Panc1 (cell line): ENCODE measurements at regions of chr4 and their contacts with region 1.

Region 1: DNA sequence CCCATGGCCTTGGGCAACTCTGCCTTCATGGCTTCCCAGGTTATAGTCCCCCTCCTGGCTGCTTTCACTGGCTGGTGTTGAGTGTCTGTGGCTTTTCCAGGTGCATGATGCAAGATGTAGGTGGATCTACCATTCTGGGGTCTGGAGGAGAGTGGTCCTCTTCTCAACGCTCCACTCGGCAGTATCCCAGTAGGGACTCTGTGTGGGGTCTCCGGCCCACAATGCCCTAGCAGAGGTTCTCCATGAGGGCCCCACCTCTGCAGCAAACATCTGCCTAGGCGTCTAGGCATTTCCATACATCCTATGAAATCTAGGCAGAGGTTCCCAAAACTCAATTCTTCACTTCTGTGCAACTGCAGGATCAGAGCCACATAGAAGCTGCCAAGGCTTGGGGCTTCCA is 763.4 kb upstream of the EPHA5 start:
- DNase-seq: no peak
- ATAC-seq: no peak
- H3K4me3 ChIP-seq: no peak overlapping the region
- H3K27ac ChIP-seq: no peak overlapping the region
- H3K4me1 ChIP-seq: no peaks in the 10 kb centered on the region
- H3K27me3 ChIP-seq: no peaks in the 10 kb centered on the region
- CTCF ChIP-seq: no peak

Region 2: DNA sequence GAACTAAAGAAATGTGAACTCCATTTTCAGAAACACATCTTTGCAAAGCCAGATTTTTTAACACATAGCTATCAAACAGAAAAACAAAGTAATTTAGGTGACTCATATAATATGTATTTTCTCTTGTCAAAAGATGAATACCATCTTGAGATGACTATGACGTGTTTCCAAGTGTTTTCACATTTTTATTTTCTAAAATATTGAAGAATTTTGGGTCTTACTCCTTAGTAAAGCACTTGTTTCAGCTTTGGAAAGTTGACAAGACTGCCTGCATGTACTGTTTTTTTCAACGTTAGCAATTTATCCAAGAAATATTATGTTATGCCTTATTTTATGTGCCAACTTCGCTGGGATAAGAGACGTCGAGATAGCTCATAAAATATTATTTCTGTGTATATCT is 29.6 kb before region 1 on chr4:
- CTCF ChIA-PET with region 1: no interaction called
- POLR2A ChIA-PET with region 1: interaction called, 10 read pairs
- in situ Hi-C with region 1: no loop called
- intact Hi-C with region 1: no loop called
- DNase-seq: no peak
- ATAC-seq: no peak
- H3K4me3 ChIP-seq: no peak overlapping the region
- H3K27ac ChIP-seq: no peak overlapping the region
- H3K4me1 ChIP-seq: no peaks in the 10 kb centered on the region
- H3K27me3 ChIP-seq: no peaks in the 10 kb centered on the region
- CTCF ChIP-seq: no peak

Region 3: GRCh38 chr4:66524781-66525180 is 91.1 kb after region 1 on chr4:
- CTCF ChIA-PET with region 1: no interaction called
- POLR2A ChIA-PET with region 1: no interaction called
- in situ Hi-C with region 1: no loop called
- intact Hi-C with region 1: no loop called
- DNase-seq: no peak
- ATAC-seq: no peak
- H3K4me3 ChIP-seq: no peak overlapping the region
- H3K27ac ChIP-seq: no peak overlapping the region
- H3K4me1 ChIP-seq: no peaks in the 10 kb centered on the region
- H3K27me3 ChIP-seq: no peaks in the 10 kb centered on the region
- CTCF ChIP-seq: no peak